Dorsolateral prefrontal cortex (tissue), 120 donors: ENCODE measurements at regions of chr1 and their contacts with region 1.

Region 1: GRCh38 chr1:94237291-94238226 is at the start of gene ARHGAP29:
- DNase-seq: peak in 9 of 10 donors; percentile 21 to 89 (median 53)
- H3K4me3 ChIP-seq: peak within 1 kb of the TSS; percentile 41 to 83 (median 66)
- H3K27ac ChIP-seq: peak within 1 kb of the TSS in 51 of 59 donors; percentile 17 to 93 (median 80)
- H3K27me3 ChIP-seq: peaks cover 0 to 79% (median 27%) of the 10 kb centered on the region in 45 donors
- CTCF ChIP-seq: peak in 1 of 56 donors; percentile 10
- total RNA-seq, gene ARHGAP29: 12.1 to 54.8 (median 21.8) TPM

Region 2: DNA sequence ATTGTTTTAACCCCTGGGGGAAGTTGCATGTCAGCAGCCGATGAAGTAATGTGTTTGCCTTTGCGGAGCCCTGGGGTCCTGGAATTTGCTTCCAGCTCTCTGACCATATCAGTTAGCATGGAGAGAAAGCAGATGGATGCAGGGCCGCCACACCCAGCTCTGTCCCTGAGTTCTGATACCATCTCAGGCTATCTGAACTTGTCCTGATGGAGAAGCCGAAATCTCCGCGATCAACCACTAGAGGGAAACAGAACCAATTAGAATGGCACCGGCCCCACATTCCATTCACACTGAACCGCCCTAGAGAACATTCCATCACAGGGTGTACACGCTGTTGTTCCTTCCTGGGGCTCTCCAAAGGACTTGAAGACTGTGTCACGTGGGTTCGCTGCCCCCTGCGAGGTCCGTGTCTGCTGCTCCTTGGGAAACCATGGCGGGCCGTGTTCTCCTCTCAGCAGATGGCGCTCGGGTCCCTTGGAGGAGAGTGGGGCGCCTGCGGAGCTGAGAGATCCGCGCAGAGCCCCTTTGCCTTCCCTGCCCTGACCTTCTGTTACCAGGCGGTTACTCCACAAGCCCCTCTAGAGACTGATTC is 192.0 kb before region 1 on chr1:
- intact Hi-C with region 1: loop called in 1 of 2 experiments (anchors 5 kb)
- DNase-seq: peak; percentile 31 to 79 (median 58)
- H3K4me3 ChIP-seq: peak overlapping the region in 33 of 59 donors; percentile 6 to 54 (median 34)
- H3K27ac ChIP-seq: peak overlapping the region in 39 of 59 donors; percentile 13 to 87 (median 62)
- H3K27me3 ChIP-seq: no peaks in the 10 kb centered on the region
- CTCF ChIP-seq: peak; percentile 45 to 82 (median 71)

Region 3: DNA sequence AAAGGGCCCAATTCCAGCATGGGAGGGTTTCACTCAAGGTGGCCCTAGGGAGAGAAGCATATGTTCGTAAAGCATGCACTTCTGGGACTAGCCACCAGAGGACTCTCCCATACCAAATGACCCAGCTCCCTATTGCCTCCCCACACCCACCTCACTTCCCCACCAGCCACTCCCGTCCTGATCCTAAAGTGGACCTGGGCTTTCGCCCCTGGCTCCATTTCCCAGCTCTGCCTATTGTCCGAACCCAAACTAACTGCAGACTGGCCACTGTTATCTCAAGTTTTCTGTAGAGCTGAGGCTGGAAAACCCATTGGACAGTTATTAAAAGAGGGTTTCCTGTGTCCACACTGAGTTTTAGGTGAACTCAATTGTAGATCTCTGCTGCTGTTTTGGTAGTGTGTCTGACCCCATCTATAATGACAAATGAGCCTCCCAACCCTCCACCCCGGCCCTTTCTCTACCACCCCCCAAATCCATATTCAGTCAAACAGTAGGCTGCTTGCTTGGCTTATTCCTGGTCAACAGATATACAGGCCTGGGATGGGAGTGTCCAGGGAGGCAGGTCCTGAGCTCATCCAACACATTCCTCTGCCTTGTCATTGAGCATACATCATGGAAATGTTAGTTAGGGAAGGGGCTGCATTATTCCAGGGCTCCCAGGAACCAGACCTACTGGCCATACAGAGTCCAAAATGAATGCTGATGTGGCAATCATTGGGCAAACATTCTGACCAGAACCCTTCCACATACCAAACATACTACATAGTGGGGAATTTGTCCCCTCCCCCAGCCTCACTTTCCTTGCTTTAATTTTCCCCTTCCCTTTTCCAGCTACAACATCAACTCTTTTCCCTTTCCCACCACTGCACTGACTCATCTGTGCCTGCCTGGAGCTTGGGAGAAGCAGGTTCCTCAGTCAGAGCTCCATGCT is 175.8 kb before region 1 on chr1:
- intact Hi-C with region 1: loop called in 1 of 2 experiments (anchors 10 kb)
- DNase-seq: peak in 7 of 10 donors; percentile 52 to 75 (median 59)
- H3K4me3 ChIP-seq: no peak overlapping the region
- H3K27ac ChIP-seq: peak overlapping the region in 9 of 59 donors; percentile 5 to 61 (median 23)
- H3K27me3 ChIP-seq: no peaks in the 10 kb centered on the region
- CTCF ChIP-seq: peak; percentile 77 to 95 (median 88)